SK-N-SH (cell line): ENCODE measurements at regions of chr2 and their contacts with region 1.

Region 1: DNA sequence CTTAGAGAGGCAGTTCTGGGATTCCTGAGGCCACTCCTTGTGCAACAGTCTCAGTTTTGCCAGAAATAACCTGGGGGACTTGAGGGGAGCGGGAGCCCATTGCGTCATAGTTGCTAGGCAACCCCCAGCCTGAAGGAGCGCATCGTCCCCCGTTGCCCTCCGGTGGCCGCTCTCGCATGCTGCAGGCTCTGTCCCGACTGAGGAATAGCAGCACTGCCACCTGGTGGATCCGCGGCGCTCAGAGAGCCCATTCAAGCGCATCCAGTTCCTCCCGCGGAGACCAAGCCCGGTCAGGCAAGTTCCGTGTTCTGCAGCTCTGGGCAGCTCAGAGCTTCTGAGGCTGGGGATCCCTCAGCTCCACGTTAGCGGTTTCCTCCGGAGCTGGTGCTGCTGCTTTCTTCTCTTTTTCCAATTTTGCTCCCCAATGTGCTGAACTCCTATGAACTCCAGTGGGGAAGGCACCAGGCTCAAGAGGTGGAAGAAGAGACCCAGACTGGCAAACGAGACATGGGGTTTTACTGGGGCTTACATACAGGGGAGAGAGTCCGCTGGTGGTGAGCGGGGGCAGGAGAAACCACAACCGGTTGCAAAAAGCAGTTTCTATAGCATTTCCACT is 15.1 kb downstream of the SLC4A3 start:
- DNase-seq: peak; percentile 95
- H3K4me3 ChIP-seq: peak overlapping the region in 1 of 2 experiments; percentile 39; a peak in 1 of 4 replicates
- H3K27ac ChIP-seq: no peak overlapping the region
- H3K4me1 ChIP-seq: peaks cover 13 to 20% of the 10 kb centered on the region in 2 experiments; a peak in 3 of 4 replicates
- H3K27me3 ChIP-seq: no peaks in the 10 kb centered on the region; the same call in 1 of the 2 replicates
- CTCF ChIP-seq: peak; percentile 98
- EP300 ChIP-seq: no peak
- RAD21 ChIP-seq: peak; percentile 93

Region 2: DNA sequence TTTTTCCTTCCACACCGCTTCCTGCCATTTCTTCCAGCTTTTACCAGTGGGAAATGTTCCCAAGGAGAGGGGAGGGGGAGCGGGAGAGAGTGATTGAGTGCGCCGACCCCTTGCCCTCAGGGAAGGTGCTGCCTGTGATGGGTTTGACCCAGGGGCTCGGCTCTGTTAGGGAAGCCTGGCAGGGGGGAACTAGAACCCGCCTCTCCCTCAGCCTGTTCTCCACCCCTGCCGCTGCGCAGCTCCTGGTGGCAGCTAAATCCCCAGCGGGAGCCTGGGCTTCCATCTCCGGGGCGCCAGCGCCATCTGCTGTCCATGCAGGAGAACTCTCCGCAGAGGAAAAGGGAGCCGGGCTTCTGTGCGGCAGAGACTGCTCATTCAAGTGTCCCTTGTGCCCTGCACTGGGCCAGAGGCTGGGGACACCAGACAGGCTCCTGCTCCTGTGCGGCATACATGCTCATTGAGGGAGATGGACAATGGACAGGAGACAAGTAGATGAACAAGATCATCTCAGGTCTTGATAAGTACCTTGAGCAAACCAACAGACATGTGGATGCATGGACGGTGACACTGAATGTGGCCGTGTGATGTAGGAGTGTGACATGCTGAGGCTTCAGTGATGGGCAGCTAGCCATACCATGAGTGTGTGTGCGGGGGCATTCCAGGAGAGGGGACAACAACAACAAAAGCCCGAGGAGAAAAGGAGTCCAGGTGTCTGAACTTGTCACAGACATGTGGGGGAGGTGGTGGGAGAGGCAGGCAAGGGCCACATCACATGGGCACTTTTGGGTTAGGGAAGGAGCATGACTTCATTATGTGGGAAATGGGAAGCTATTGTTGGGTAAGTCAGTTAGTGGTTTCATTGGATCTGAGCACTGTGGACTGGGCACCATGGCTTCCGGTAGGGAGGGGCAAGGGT is 112.3 kb before region 1 on chr2:
- CTCF ChIA-PET with region 1: interaction called, 19 read pairs
- POLR2A ChIA-PET with region 1: no interaction called
- DNase-seq: peak; percentile 93
- H3K4me3 ChIP-seq: peak overlapping the region; percentile 28 to 36; a peak in 3 of 4 replicates
- H3K27ac ChIP-seq: peak overlapping the region in 1 of 2 experiments; percentile 12; a peak in 1 of 4 replicates
- H3K4me1 ChIP-seq: peaks cover 0 to 38% of the 10 kb centered on the region in 2 experiments; a peak in 2 of 4 replicates
- H3K27me3 ChIP-seq: no peaks in the 10 kb centered on the region; the same call in 1 of the 2 replicates
- CTCF ChIP-seq: peak; percentile 91
- EP300 ChIP-seq: no peak
- RAD21 ChIP-seq: peak; percentile 99

Region 3: DNA sequence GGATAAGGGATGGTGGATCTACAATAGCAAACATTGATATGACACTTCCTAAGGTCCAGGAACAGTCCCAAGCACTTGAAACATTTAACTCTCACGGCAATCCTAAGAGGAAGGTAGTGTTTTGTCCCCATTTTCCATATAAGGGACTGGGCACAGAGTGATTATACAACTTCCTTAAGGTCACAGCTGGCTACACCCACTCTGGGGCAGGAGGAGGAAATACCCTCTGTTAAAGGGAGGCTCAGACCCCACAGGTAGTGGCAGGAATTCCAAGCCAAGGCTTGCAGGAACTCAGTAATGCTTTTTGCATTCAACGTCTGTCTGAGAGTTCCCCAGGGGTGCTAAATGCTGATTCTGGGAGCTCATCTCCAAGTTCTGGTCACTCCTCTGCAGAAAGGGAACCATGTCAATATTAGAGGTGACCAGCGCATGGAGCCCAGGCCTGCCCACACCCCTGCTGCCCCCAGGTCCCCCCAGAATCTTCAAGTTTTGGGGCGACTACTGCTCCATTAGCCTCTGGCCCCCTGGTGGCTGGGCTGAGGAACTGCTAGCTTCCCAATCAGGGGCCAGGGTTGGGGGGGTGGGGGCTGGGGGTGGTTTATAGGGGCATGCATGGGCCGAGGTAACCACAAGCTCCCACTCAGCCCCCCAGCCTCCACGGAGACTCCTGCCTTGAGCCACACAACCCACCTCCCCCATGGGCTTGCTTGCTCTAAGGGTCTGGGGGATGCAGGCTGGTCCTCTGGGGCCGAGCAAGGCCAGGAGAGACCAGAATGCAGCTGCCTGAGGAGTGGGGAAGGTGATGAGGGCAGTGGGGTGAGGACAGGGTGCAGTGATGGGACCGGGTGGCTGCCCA is 82.3 kb before region 1 on chr2:
- CTCF ChIA-PET with region 1: interaction called, 36 read pairs
- POLR2A ChIA-PET with region 1: no interaction called
- DNase-seq: peak; percentile 90
- H3K4me3 ChIP-seq: no peak overlapping the region
- H3K27ac ChIP-seq: no peak overlapping the region
- H3K4me1 ChIP-seq: peaks cover 0 to 10% of the 10 kb centered on the region in 2 experiments; a peak in 1 of 4 replicates
- H3K27me3 ChIP-seq: no peaks in the 10 kb centered on the region
- CTCF ChIP-seq: peak; percentile 70
- EP300 ChIP-seq: no peak
- RAD21 ChIP-seq: no peak

Region 4: DNA sequence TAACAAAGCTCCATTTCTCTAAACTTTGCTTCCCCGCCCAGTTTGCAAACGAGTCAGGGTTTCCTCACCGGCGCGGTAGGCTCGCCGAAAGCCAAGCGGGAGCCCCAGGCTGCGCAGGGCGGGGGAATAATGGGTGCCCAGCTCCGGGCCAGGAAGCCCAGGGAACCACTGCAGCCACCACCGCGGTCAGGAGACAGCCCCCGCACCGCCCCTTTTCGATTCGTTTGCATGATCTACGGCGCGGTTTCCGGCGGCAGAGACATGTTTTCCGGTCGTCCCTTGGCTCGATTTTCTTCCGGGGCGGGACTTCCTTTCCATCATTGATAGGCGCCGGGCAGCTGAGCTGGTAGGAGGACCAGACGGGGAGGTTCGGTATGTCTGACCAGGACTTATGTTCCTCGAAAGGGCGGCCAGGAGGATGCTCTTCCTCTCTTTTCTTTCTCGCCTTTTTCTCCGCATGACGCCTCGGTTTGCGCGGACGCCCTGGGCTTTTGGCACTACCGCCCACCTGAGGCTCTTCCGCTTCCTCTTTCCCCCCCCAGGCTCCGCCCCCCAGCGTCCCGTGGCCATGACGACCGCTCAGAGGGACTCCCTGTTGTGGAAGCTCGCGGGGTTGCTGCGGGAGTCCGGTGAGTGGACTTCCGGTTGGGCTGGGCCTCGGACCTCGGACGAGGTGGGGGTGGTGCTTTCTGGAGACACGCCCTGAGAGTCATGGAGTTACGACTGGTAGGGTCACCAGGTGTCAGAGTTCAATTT is 44.8 kb before region 1 on chr2 and contains the start of gene STK11IP:
- CTCF ChIA-PET with region 1: interaction called, 22 read pairs
- POLR2A ChIA-PET with region 1: no interaction called
- DNase-seq: peak; percentile 98
- H3K4me3 ChIP-seq: peak within 1 kb of the TSS; percentile 71 to 73
- H3K27ac ChIP-seq: peak within 1 kb of the TSS; percentile 80 to 95
- H3K4me1 ChIP-seq: peaks cover 0 to 4% of the 10 kb centered on the region in 2 experiments; a peak in 2 of 4 replicates
- H3K27me3 ChIP-seq: no peaks in the 10 kb centered on the region
- CTCF ChIP-seq: no peak
- EP300 ChIP-seq: no peak
- RAD21 ChIP-seq: no peak
- polyA plus RNA-seq, gene STK11IP: 22.1 and 22.9 TPM in 2 replicates

Region 5: GRCh38 chr2:219627103-219628100 is 15.2 kb before region 1 on chr2 and contains the start of gene SLC4A3:
- CTCF ChIA-PET with region 1: interaction called, 59 read pairs
- POLR2A ChIA-PET with region 1: interaction called, 4 read pairs
- DNase-seq: peak; percentile 94
- H3K4me3 ChIP-seq: peak within 1 kb of the TSS; percentile 64 to 68
- H3K27ac ChIP-seq: peak within 1 kb of the TSS in 1 of 2 experiments; percentile 68; a peak in 1 of 4 replicates
- H3K4me1 ChIP-seq: peaks cover 0 to 13% of the 10 kb centered on the region in 2 experiments; a peak in 1 of 4 replicates
- H3K27me3 ChIP-seq: no peaks in the 10 kb centered on the region
- CTCF ChIP-seq: 0 out of 2 replicates have a peak, but pooled peaks have one; percentile 14
- EP300 ChIP-seq: no peak
- RAD21 ChIP-seq: no peak
- polyA plus RNA-seq, gene SLC4A3: 12.2 and 12.3 TPM in 2 replicates